Dendritic cell treated with granulocyte-macrophage colony-stimulating factor and Interleukin-4, amounts not matched to agents 40 ng/mL and 50 ng/mL, for 4 days (primary cell): ENCODE measurements at regions of chrX and their contacts with region 1.

Region 1: DNA sequence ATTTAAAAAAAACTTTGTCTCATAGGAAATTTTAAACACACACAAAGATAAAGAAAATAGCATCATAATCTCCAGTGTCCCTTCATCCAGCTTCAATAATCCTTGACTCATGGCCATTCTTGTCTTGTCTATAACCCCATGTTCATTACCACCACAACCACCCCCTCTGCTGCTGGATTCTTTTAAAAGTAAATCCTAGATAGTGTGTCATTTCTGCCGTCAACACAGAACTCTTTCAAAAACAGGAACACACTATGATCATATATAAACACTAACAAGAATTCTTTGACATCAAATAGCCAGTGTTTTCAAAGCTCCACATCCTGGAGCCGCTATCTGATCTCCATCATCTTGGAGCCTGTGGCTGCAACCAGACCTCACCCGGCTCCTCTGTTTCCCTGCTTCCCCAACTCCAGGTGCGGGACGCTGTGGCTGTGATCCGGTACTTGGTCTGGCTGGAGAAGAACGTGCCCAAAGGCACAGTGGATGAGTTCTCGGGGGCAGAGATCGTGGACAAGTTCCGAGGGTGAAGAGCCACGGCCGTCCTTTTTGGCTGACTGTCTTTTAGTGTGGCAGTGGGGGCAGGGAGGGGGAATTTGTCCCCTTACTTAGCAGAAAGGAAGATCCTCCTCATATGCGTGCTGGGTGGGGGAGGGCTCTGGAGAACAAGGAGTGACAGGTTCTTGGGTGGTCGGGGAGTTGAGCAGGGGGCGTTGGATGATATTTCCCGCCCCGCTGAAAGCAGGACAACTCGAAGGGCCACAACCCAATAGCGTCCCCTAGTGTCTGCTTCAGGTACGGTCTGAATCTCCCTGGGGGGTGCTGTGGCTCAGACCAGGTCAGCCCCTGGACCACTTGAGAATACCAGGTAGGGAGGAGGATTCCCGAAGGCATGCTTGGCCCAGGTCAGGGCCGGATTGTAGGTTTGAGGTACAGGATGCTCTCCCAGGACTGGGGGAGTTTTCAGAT is 15.6 kb downstream of the XPNPEP2 start:
- H3K4me3 Mint-ChIP-seq: peak overlapping the region; percentile 67
- H3K27ac Mint-ChIP-seq: peak overlapping the region; percentile 88
- H3K4me1 Mint-ChIP-seq: peaks cover 82% of the 10 kb centered on the region
- H3K27me3 Mint-ChIP-seq: no peaks in the 10 kb centered on the region

Region 2: DNA sequence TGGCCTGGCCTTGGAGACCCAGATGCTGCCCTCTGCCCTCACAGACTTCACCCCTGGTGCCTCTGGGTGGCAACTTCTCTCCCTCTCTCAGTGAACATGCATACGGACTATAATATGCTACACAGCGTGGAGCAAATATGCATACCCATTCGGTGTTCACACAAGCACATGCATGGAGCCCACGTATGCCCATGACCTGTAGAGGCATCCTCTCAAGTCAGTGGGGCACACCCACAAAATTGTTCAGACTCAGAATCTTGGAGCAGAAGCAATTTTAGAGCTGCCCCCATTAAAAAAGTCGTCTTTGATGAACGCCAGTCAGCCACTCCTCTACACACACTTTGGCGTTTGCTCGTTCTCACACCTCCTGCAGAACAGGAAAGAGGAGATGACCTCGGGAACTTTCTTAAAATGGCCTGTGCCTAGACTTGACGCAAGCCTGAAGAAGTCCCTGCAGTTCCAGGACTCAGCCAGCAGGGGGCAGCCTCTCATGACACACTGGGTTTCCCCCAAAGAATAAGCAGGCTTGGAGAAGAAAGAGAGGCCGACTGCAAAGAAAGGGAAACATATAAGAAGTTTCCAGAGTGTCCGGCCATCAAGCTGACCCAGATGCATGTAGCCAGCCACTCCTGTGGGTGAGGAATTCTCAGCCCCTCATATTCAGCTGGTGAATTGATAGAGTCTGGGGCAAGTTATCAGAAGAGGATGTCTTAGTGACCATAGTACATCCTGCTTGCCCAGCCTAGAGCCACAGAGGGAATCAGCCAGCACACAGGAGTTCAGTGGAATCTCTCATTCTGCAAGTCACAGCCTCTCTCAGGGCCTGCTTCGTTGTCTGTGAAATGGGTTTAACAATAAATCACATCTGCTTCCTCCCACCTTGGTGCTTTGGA is 116.9 kb before region 1 on chrX:
- intact Hi-C with region 1: loop called (anchors 1 kb)
- H3K4me3 Mint-ChIP-seq: no peak overlapping the region
- H3K27ac Mint-ChIP-seq: no peak overlapping the region
- H3K4me1 Mint-ChIP-seq: peaks cover 28% of the 10 kb centered on the region
- H3K27me3 Mint-ChIP-seq: no peaks in the 10 kb centered on the region